Calu3 (cell line): ENCODE measurements at regions of chr19 and their contacts with region 1.

Region 1: DNA sequence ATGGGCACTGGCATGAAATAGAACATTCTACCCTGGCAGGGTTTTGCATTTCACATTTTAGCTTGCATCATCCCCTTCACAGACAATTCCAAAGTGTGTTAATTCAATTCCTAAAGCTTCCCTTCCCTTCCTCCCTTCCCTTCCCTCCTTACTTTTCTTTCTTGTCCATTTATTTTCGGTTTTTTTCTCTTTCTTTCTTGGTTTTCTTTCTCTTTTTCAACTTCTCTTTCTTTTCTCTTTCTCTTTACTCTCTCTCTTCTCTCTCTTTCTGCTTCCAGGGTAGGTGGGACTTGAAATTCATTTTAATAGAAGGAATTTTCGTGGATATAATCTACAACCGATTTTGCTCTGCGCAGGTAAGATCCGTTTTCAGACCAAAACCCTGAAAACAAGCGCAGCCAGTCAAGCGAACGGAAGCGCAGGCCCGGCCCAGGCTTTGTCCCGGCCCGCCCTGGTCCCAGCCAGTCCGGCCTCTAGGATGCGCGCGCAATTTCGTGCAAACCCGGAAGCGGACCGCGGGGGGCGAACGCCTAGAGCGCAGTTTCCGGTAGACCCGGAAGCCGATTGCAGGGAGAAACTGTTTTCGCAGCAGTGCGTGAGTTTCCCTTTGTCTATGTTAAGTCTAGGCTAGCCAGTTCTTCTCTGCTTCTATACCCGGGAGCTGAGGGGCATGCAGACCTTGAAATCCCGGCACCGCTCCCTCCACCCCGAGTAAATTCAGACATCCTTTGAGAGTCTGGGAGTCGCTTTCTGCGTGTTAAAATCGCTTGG is at the start of gene ZNF528:
- DNase-seq: no peak
- H3K4me3 Mint-ChIP-seq: no peak within 1 kb of the TSS
- H3K27ac Mint-ChIP-seq: no peak within 1 kb of the TSS
- H3K4me1 Mint-ChIP-seq: no peaks in the 10 kb centered on the region
- H3K27me3 Mint-ChIP-seq: no peaks in the 10 kb centered on the region
- CTCF ChIP-seq: no peak
- total RNA-seq, gene ZNF528: not detected in 2 replicates

Region 2: DNA sequence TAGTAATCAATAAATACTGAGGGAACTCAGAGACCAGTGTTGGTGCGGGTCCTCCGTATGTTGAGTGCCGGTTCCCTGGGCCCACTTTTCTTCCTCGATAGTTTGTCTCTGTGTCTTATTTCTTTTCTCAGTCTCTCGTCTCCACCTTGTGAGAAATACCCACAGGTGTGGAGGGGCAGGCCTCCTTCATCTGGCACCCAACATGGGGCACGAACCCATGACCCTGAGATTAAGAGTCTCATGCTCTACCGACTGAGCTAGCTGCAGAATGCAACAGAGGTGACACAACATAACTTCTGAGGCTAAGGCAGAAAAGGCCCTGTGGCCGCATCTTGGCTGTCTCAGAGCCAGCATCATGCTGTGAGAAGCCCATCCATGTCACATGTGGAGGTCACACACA is 475.5 kb before region 1 on chr19:
- CTCF ChIA-PET with region 1: interaction called, 10 read pairs
- intact Hi-C with region 1: no loop called
- DNase-seq: peak; percentile 10
- H3K4me3 Mint-ChIP-seq: no peak overlapping the region
- H3K27ac Mint-ChIP-seq: no peak overlapping the region
- H3K4me1 Mint-ChIP-seq: peaks cover 8% of the 10 kb centered on the region
- H3K27me3 Mint-ChIP-seq: no peaks in the 10 kb centered on the region
- CTCF ChIP-seq: no peak

Region 3: DNA sequence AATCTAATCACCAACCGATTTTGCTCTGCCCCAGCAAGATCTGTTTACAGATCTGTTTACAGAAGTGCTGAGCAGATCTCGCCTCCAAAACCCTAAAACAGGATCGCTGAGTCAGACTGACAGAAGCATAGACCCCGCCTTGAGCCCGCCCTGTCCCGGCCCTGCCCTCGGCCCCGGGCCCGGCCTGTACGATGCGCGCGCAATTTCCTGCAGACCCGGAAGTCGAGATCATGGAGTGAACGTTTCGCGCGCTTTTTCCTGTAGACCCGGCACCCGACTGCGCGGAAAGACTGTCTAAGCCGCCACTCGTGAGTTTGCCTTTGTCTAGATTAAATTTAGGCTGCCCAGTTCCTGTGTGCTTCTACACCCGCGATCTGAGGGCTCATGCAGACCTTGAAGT is 31.4 kb after region 1 on chr19 and contains the start of gene ZNF534:
- CTCF ChIA-PET with region 1: no interaction called
- intact Hi-C with region 1: no loop called
- DNase-seq: no peak
- H3K4me3 Mint-ChIP-seq: no peak within 1 kb of the TSS
- H3K27ac Mint-ChIP-seq: no peak within 1 kb of the TSS
- H3K4me1 Mint-ChIP-seq: no peaks in the 10 kb centered on the region
- H3K27me3 Mint-ChIP-seq: no peaks in the 10 kb centered on the region
- CTCF ChIP-seq: no peak
- total RNA-seq, gene ZNF534: not detected in 2 replicates